Heart right ventricle (tissue), 16 donors: ENCODE measurements at regions of chr11 and their contacts with region 1.

Region 1: GRCh38 chr11:120335908-120336640 is at the start of gene ARHGEF12:
- DNase-seq: peak; percentile 97 to 98
- ATAC-seq: peak; percentile 74 to 89 (median 86)
- H3K4me3 ChIP-seq: peak within 1 kb of the TSS; percentile 82 to 99 (median 92)
- H3K27ac ChIP-seq: peak within 1 kb of the TSS; percentile 91 to 100 (median 99)
- H3K4me1 ChIP-seq: peaks cover 4 to 74% (median 56%) of the 10 kb centered on the region in 9 donors
- H3K27me3 ChIP-seq: peaks cover 0 to 94% (median 0%) of the 10 kb centered on the region in 7 donors
- CTCF ChIP-seq: peak in 7 of 9 donors; percentile 5 to 61 (median 29)
- total RNA-seq, gene ARHGEF12: 77.7 to 155 (median 115) TPM

Region 2: DNA sequence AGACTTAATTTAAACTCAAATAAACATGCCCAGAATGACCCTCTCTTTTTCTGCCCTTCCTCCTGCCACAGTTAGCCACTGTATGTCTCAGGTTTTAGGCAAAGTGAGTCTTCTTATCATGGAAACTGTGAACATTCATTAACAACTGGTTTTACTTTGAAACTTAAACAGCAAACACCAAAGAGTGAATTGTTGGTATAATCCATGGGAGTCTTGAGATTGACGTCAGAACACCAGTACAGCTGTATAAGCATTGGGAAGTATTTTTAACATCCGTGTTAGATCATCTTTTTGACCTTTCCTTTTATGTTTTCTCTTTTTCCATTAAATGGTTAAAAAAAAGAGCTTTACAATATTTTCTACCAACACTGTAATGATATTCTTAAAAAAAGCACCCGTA is 39.0 kb after region 1 on chr11:
- intact Hi-C with region 1: loop called in 2 of 10 experiments (anchors 5 kb)
- DNase-seq: no peak
- ATAC-seq: peak in 5 of 8 donors; percentile 29 to 78 (median 44)
- H3K4me3 ChIP-seq: no peak overlapping the region
- H3K27ac ChIP-seq: peak overlapping the region in 6 of 10 donors; percentile 2 to 57 (median 10)
- H3K4me1 ChIP-seq: peaks cover 3 to 83% (median 56%) of the 10 kb centered on the region in 9 donors
- H3K27me3 ChIP-seq: peaks cover 0 to 8% (median 0%) of the 10 kb centered on the region in 7 donors
- CTCF ChIP-seq: no peak

Region 3: GRCh38 chr11:120400564-120401364 is 64.7 kb after region 1 on chr11:
- intact Hi-C with region 1: loop called in 1 of 10 experiments (anchors 5 kb)
- DNase-seq: peak in 1 of 2 donors; percentile 25
- ATAC-seq: peak in 7 of 8 donors; percentile 51 to 93 (median 80)
- H3K4me3 ChIP-seq: peak overlapping the region in 1 of 10 donors; percentile 4
- H3K27ac ChIP-seq: peak overlapping the region in 7 of 10 donors; percentile 7 to 57 (median 30)
- H3K4me1 ChIP-seq: peaks cover 11 to 87% (median 63%) of the 10 kb centered on the region in 9 donors
- H3K27me3 ChIP-seq: peaks cover 0 to 6% (median 0%) of the 10 kb centered on the region in 7 donors
- CTCF ChIP-seq: no peak

Region 4: DNA sequence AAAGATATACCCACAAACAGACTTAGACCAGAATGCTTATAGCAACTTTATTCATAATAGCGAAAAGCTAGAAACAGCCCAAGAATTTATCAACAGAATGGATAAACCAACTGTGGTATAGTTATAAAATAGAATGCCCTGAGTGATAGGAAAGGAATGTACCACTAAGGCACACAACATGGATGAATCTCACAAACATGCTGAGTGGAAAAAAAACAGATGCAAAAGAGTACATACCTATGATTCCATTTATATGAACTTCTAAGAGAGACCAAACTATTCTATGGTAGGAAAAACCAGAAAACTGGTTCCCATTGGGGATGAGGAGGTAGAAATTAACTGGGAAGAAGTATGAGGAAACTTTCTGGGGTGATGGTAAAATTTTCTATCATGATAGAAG is 135.1 kb after region 1 on chr11:
- intact Hi-C with region 1: loop called in 1 of 10 experiments (anchors 10 kb)
- DNase-seq: no peak
- ATAC-seq: no peak
- H3K4me3 ChIP-seq: no peak overlapping the region
- H3K27ac ChIP-seq: no peak overlapping the region
- H3K4me1 ChIP-seq: peaks cover 0 to 7% (median 0%) of the 10 kb centered on the region in 9 donors
- H3K27me3 ChIP-seq: no peaks in the 10 kb centered on the region
- CTCF ChIP-seq: no peak

Region 5: GRCh38 chr11:120682866-120683265 is 346.8 kb after region 1 on chr11:
- intact Hi-C with region 1: loop called in 4 of 10 experiments (anchors 10 kb)
- DNase-seq: no peak
- ATAC-seq: no peak
- H3K4me3 ChIP-seq: no peak overlapping the region
- H3K27ac ChIP-seq: no peak overlapping the region
- H3K4me1 ChIP-seq: no peaks in the 10 kb centered on the region
- H3K27me3 ChIP-seq: peaks cover 3 to 68% (median 41%) of the 10 kb centered on the region in 7 donors
- CTCF ChIP-seq: no peak

Region 6: DNA sequence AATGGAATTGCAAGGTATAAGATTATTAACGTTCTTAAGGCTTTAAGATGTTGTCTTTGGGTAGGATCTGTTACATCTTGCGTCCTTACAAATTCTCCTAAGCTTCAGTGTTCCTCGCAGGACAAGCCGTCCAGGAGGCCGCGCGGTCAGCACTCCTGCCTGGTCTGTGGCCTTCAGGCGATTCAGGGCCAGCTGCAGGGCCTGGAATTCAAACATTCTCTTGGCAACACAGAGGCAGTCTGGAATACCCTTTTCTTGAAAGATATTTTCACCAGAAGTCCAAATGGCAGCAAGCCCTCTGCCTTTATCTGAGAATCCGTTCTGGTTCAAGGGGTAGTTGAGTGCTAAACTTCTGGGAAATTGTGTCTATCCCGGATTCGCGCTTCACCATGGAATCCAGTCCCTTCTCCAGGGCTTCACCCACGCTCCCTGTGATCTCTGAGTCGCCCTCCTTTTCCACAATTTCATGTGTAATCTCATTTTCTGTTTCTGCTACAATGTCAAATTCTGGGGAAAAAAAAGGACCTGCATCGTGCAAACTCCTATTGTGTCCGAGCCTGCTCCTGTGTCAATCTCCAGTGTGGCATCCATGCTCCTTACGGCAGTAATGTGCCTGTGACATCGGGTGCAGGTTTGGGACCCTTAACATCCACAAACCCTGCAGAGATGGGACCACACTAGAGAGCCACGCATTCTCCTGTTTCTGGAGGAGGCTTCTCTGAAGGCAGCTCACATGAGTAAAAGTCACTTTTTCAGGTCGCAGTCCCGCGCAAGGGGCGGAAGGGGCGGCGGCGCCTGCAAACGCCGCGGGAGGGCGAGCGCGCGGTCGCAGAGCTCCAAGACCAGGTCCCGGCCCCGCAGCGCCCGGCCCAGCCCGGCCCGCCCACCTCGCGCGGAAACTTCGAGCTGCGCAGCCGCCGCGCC is 1090.7 kb after region 1 on chr11:
- intact Hi-C with region 1: no loop called
- DNase-seq: peak; percentile 30 to 56
- ATAC-seq: peak; percentile 79 to 92 (median 84)
- H3K4me3 ChIP-seq: peak overlapping the region in 9 of 10 donors; percentile 16 to 41 (median 33)
- H3K27ac ChIP-seq: peak overlapping the region in 3 of 10 donors; percentile 25 to 38 (median 28)
- H3K4me1 ChIP-seq: peaks cover 0 to 29% (median 0%) of the 10 kb centered on the region in 9 donors
- H3K27me3 ChIP-seq: peaks cover 0 to 5% (median 0%) of the 10 kb centered on the region in 7 donors
- CTCF ChIP-seq: peak in 5 of 9 donors; percentile 24 to 48 (median 41)